ENCODE measurements at regions of chr16 and their contacts with region 1.

Region 1: GRCh38 chr16:67833418-67834241 is 8.5 kb upstream of the THAP11 start:
- DNase-seq: peak; percentile 96
- H3K4me3 Mint-ChIP-seq: peak overlapping the region; percentile 84
- H3K27ac Mint-ChIP-seq: peak overlapping the region; percentile 77
- H3K4me1 Mint-ChIP-seq: peaks cover 22% of the 10 kb centered on the region
- H3K27me3 Mint-ChIP-seq: no peaks in the 10 kb centered on the region

Region 2: DNA sequence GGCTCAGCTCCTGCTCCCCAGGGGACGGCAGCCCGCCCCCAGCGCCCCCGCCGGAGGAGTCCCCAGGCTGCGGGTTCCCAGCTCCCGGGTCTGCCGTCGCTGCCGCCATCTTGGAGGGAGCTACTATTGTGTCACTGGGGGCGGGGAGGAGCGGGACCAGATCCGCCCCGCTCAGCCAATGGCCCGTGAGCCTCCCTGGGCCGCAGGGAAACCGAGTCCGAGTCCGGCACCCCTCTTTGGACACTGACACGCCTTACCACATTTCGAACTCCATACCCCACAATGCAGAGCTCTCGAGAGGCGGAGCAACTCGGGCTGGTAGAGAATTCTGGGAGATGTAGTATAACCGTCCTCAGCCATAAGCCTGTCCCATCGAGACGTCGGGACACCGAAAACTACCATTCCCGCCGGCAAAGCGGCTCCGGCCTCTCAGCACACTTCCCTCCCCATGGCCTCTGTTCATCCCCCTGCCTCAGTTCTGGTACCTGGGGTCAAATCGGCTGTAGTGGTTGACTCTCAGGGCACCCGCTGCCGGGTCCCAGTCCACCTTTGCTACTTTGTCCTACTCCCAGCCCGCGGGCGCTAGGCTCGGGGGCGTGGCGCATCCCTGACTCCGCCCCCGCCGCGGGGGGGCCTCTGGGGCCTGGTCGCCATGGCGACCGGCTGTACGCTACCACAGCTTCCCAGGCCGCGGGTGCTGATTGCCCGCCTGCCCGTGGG is 27.0 kb before region 1 on chr16 and contains the starts of genes RANBP10 and TSNAXIP1:
- CTCF ChIA-PET with region 1: interaction called, 5 read pairs
- POLR2A ChIA-PET with region 1: interaction called, 10 read pairs
- DNase-seq: peak; percentile 98
- H3K4me3 Mint-ChIP-seq: peak within 1 kb of the TSS; percentile 90
- H3K27ac Mint-ChIP-seq: peak within 1 kb of the TSS; percentile 86
- H3K4me1 Mint-ChIP-seq: peaks cover 40% of the 10 kb centered on the region
- H3K27me3 Mint-ChIP-seq: no peaks in the 10 kb centered on the region
- total RNA-seq, gene RANBP10: 23.2 to 24.3 TPM
- total RNA-seq, gene TSNAXIP1: 0.20 to 0.25 TPM

Region 3: DNA sequence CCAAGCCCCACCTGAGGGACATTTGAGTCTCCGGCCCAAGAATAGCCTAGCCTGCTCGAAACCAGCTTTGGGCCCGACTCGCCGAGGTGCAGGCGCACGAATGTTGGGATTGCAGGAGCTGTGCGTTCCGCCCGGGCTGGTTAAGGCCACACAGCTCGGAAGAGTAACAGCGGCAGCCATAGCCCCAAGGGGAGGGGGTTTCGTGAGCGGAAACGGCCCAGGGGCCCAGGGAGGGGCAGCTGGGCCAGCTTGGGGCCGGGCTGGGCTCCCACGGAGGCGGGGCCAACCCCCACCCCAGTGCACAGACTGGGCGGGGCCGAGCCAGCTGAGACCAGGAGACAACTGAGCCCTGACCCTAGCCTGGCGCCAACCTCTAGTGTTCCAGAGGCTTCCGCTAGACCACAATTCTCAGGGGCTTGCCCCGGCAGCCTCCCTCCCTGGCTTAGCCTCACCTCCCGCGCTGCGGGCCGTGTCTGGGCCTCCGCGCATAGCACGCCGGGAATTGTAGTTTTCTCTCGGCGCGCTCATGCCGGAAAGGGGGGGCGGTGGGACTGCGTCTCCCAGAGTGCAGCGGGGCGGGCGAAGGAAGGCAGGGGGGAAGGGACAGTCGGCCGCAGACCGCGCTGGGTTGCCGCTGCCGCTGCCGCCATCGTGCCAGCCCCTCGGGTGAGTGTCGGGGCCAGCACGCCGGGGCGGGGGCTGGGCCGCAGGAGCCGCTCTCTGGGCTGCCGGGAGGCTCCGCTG is 12.9 kb after region 1 on chr16 and contains the start of gene NUTF2:
- CTCF ChIA-PET with region 1: interaction called, 22 read pairs
- POLR2A ChIA-PET with region 1: interaction called, 43 read pairs
- DNase-seq: peak; percentile 97
- H3K4me3 Mint-ChIP-seq: peak within 1 kb of the TSS; percentile 89
- H3K27ac Mint-ChIP-seq: peak within 1 kb of the TSS; percentile 79
- H3K4me1 Mint-ChIP-seq: peaks cover 52% of the 10 kb centered on the region
- H3K27me3 Mint-ChIP-seq: no peaks in the 10 kb centered on the region
- total RNA-seq, gene NUTF2: 96.4 to 101 TPM

Region 4: GRCh38 chr16:67926181-67926746 is 92.6 kb after region 1 on chr16:
- CTCF ChIA-PET with region 1: no interaction called
- POLR2A ChIA-PET with region 1: no interaction called
- DNase-seq: no peak
- H3K4me3 Mint-ChIP-seq: no peak overlapping the region
- H3K27ac Mint-ChIP-seq: peak overlapping the region; percentile 48
- H3K4me1 Mint-ChIP-seq: peaks cover 5% of the 10 kb centered on the region
- H3K27me3 Mint-ChIP-seq: no peaks in the 10 kb centered on the region

Measured in activated CD4-positive, alpha-beta memory T cell treated with anti-CD3 and anti-CD28 coated beads, Interleukin-2, amount 10 ng/mL, durations not matched to agents 7 days and 5 days (primary cell).